ENCODE measurements at regions of chr2 and their contacts with region 1.

Region 1: GRCh38 chr2:101080211-101081068 is 70.7 kb downstream of the TBC1D8 start:
- DNase-seq: peak; percentile 44 to 97
- ATAC-seq: peak; percentile 92 to 94
- H3K4me3 ChIP-seq: no peak overlapping the region
- H3K27ac ChIP-seq: peak overlapping the region; percentile 87 to 95
- H3K4me1 ChIP-seq: peaks cover 87% of the 10 kb centered on the region
- CTCF ChIP-seq: no peak
- EP300 ChIP-seq: peak; percentile 96
- POLR2A ChIP-seq: no peak
- RAD21 ChIP-seq: peak; percentile 38 to 62

Region 2: DNA sequence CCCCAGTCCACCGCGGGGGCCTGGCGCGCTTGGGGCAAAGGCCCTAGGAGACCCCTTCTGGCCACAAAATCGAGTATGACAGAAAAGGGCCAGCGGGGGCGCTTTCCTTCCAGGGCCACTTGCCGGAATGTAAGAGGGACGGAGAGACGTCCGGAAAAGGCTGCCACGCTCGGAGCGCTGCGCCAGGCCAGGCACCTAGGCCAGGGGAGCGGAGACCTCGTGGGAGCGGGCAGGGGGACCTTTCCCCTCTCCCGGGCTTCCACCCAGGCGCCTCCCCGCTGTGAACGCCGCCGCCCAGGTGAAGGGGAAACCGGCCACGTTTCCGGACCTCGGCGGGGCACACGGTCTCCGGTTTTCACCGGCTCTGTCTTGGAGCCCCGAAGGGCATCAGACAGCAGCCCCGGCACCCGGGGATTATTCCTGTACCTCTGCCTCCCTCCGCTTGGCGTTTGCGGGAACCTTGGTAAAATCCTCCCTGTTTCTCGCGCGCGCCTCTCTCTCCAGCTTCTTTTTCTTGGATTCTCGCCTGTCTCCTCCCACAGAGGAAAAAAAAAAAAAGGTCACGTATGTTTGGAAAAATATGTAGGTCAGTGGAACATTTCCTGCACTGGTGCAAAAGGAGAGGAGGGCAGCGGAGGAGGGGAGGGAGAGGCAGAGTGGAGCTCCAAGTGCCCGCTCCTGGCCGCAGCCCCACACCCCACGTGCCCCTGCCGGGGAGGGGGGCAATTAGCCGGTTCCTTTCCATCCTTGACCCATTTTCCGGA is 261.7 kb before region 1 on chr2:
- CTCF ChIA-PET with region 1: no interaction called
- POLR2A ChIA-PET with region 1: no interaction called
- DNase-seq: peak; percentile 62 to 72
- ATAC-seq: peak; percentile 65 to 79
- H3K4me3 ChIP-seq: peak overlapping the region; percentile 96
- H3K27ac ChIP-seq: peak overlapping the region; percentile 97 to 98
- H3K4me1 ChIP-seq: peaks cover 34% of the 10 kb centered on the region
- CTCF ChIP-seq: peak; percentile 57
- EP300 ChIP-seq: no peak
- POLR2A ChIP-seq: 0 out of 2 replicates have a peak, but pooled peaks have one; percentile 2
- RAD21 ChIP-seq: peak; percentile 51 to 57; a peak in 4 of 5 replicates

Region 3: DNA sequence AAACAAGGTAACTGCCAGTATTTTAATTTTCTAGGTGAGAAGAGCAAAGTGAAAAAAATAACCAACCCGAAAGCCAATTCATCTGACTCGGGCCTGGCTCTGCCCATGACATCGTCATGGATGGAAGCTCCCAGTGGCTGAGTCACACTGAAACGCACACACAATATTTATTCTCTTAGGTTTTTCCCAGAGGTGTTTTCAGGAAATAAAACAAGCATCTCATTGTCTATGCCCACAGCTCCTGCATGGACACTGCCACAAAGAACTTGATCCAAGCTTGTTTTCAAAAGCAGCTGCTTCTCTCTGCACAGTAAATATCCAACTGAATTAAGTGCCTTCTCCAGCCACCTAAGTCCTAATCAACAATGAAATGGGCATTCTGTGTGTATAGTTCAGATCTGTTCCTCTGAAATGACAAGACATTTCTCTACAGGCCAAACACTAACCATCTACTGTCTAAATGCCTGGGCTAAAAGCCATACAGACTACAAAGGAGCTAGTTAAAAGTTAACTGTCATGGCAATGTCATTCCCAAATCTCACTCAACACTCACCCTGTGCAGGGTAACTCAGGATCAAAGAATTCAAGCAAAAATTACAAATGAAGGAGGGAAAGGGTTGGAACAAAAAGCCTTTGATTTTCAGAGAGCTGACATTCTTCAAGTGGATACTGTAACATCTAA is 15.4 kb before region 1 on chr2:
- CTCF ChIA-PET with region 1: no interaction called
- POLR2A ChIA-PET with region 1: interaction called, 12 read pairs
- DNase-seq: peak; percentile 70 to 87
- ATAC-seq: peak; percentile 79 to 90
- H3K4me3 ChIP-seq: peak overlapping the region; percentile 21; the same call in 1 of the 3 replicates
- H3K27ac ChIP-seq: peak overlapping the region; percentile 81 to 86
- H3K4me1 ChIP-seq: peaks cover 83% of the 10 kb centered on the region
- CTCF ChIP-seq: no peak
- EP300 ChIP-seq: peak in 1 of 2 experiments; percentile 38; a peak in 1 of 5 replicates
- POLR2A ChIP-seq: no peak
- RAD21 ChIP-seq: no peak; a peak in 1 of 5 replicates

Region 4: GRCh38 chr2:101094351-101094750 is 13.9 kb after region 1 on chr2:
- CTCF ChIA-PET with region 1: no interaction called
- POLR2A ChIA-PET with region 1: no interaction called
- DNase-seq: no peak
- ATAC-seq: no peak
- H3K4me3 ChIP-seq: no peak overlapping the region
- H3K27ac ChIP-seq: peak overlapping the region; percentile 15 to 23; a peak in 4 of 6 replicates
- H3K4me1 ChIP-seq: peaks cover 48% of the 10 kb centered on the region
- CTCF ChIP-seq: no peak
- EP300 ChIP-seq: no peak
- POLR2A ChIP-seq: no peak
- RAD21 ChIP-seq: no peak

Measured in A549 (cell line).